Psoas muscle (tissue), 8 donors: ENCODE measurements at regions of chrX and their contacts with region 1.

Region 1: GRCh38 chrX:129931411-129932015 is 25.5 kb downstream of the UTP14A start:
- DNase-seq: peak; percentile 92 to 97
- ATAC-seq: peak; percentile 92 to 93 (median 93)
- H3K4me3 ChIP-seq: peak overlapping the region; percentile 70
- H3K27ac ChIP-seq: peak overlapping the region; percentile 78
- H3K4me1 ChIP-seq: no peaks in the 10 kb centered on the region
- H3K27me3 ChIP-seq: no peaks in the 10 kb centered on the region
- CTCF ChIP-seq: no peak

Region 2: GRCh38 chrX:129961180-129962083 is 29.9 kb after region 1 on chrX:
- intact Hi-C with region 1: no loop called
- DNase-seq: peak; percentile 49 to 76
- ATAC-seq: peak in 3 of 4 donors; percentile 63 to 78 (median 77)
- H3K4me3 ChIP-seq: peak overlapping the region; percentile 28
- H3K27ac ChIP-seq: no peak overlapping the region
- H3K4me1 ChIP-seq: no peaks in the 10 kb centered on the region
- H3K27me3 ChIP-seq: peaks cover 0 to 10% (median under 1%) of the 10 kb centered on the region in 3 donors
- CTCF ChIP-seq: no peak

Region 3: GRCh38 chrX:129982274-129983251 is 51.0 kb after region 1 on chrX and contains the start of gene BCORL1:
- intact Hi-C with region 1: loop called (anchors 2 kb)
- DNase-seq: peak; percentile 89 to 94
- ATAC-seq: peak; percentile 91 to 95 (median 94)
- H3K4me3 ChIP-seq: no peak within 1 kb of the TSS
- H3K27ac ChIP-seq: peak within 1 kb of the TSS; percentile 58
- H3K4me1 ChIP-seq: no peaks in the 10 kb centered on the region
- H3K27me3 ChIP-seq: no peaks in the 10 kb centered on the region
- CTCF ChIP-seq: no peak
- total RNA-seq, gene BCORL1: 4.5 to 6.2 (median 5.9) TPM